ENCODE measurements at regions of chr14 and their contacts with region 1.

Region 1: GRCh38 chr14:93317875-93318807 is 14.7 kb downstream of the BTBD7 start:
- DNase-seq: peak; percentile 37 to 53
- H3K4me3 ChIP-seq: no peak overlapping the region
- H3K27ac ChIP-seq: peak overlapping the region; percentile 18; the same call in 1 of the 2 replicates
- H3K4me1 ChIP-seq: peaks cover 9% of the 10 kb centered on the region
- H3K27me3 ChIP-seq: no peaks in the 10 kb centered on the region
- CTCF ChIP-seq: no peak

Region 2: GRCh38 chr14:93331728-93332396 is 13.7 kb after region 1 on chr14:
- CTCF ChIA-PET with region 1: no interaction called
- POLR2A ChIA-PET with region 1: interaction called, 4 read pairs
- intact Hi-C with region 1: loop called (anchors 2 kb)
- DNase-seq: no peak
- H3K4me3 ChIP-seq: peak overlapping the region; percentile 71
- H3K27ac ChIP-seq: peak overlapping the region; percentile 82
- H3K4me1 ChIP-seq: peaks cover 37% of the 10 kb centered on the region
- H3K27me3 ChIP-seq: no peaks in the 10 kb centered on the region
- CTCF ChIP-seq: no peak

Region 3: GRCh38 chr14:93527068-93527668 is 209.0 kb after region 1 on chr14:
- CTCF ChIA-PET with region 1: no interaction called
- POLR2A ChIA-PET with region 1: no interaction called
- intact Hi-C with region 1: no loop called
- DNase-seq: no peak
- H3K4me3 ChIP-seq: no peak overlapping the region
- H3K27ac ChIP-seq: no peak overlapping the region
- H3K4me1 ChIP-seq: no peaks in the 10 kb centered on the region
- H3K27me3 ChIP-seq: peaks cover 20% of the 10 kb centered on the region; the same call in 1 of the 2 replicates
- CTCF ChIP-seq: no peak